Activated naive CD4-positive, alpha-beta T cell treated with anti-CD3 and anti-CD28 coated beads for 36 hours (primary cell): ENCODE measurements at regions of chr21 and their contacts with region 1.

Region 1: DNA sequence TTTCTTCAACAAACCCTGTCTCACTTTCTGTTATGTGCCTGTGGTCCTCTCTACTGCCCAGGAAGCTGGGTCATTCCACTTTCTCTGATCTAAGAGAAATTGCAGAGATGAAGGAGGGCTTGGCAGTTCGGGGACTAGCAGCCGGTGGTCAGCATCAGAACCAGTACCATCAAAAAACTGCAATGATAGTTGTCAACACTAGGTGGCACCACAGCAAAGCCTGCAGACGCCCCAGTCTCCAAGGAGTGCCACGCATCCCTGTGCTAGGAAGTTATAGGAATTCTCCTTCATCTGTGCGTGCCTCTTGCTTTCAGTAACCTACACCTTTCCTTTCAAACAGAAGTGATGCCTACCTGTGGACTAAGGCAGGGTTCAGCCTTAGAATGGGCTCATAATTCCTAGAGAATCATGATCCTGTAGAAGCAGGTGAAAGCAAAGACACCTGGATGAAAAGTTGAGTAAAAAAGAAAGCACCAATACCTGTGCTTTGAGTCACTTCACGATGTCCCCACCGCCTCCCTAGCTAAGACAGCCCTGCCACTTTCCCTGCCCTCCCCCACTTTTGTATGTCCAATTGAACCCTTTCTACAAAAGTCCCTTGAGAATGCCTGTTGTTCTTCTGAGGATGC is 129.2 kb downstream of the ADAMTS1 start:
- DNase-seq: peak; percentile 30
- H3K4me3 Mint-ChIP-seq: no peak overlapping the region
- H3K27ac Mint-ChIP-seq: no peak overlapping the region
- H3K4me1 Mint-ChIP-seq: no peaks in the 10 kb centered on the region
- H3K27me3 Mint-ChIP-seq: peaks cover 10% of the 10 kb centered on the region

Region 2: GRCh38 chr21:25881525-25882376 is 834.2 kb before region 1 on chr21:
- CTCF ChIA-PET with region 1: interaction called, 5 read pairs
- intact Hi-C with region 1: loop called (anchors 1 kb)
- DNase-seq: peak; percentile 74
- H3K4me3 Mint-ChIP-seq: no peak overlapping the region
- H3K27ac Mint-ChIP-seq: no peak overlapping the region
- H3K4me1 Mint-ChIP-seq: no peaks in the 10 kb centered on the region
- H3K27me3 Mint-ChIP-seq: no peaks in the 10 kb centered on the region

Region 3: DNA sequence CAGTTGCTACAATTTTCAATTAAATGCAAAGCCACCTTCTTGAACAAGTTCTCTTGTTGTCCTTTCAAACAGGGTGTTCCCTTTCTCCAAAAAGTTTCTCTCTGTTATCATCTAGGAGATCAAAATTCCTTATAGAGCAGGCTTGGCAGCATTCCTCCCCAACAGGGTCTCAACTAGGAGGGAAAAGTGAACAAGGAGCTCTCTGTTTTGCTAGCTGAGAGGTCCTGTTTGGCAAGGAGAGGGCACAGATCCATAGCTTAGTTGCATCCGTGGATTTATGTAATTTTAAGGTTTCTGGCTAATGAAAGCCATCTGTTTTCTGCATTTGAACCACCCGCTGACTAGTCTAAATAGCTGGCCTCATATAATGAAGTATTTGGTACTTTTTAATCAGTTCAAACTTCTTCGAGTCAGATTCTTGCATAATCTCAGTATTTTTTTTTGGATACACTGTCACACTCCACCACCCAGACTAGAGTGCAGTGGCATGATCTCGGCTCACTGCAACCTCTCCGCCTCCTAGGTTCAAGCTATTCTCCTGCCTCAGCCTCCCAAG is 599.5 kb before region 1 on chr21:
- CTCF ChIA-PET with region 1: no interaction called
- intact Hi-C with region 1: no loop called
- DNase-seq: no peak
- H3K4me3 Mint-ChIP-seq: no peak overlapping the region
- H3K27ac Mint-ChIP-seq: no peak overlapping the region
- H3K4me1 Mint-ChIP-seq: peaks cover 24% of the 10 kb centered on the region
- H3K27me3 Mint-ChIP-seq: no peaks in the 10 kb centered on the region